ENCODE measurements at regions of chr3 and their contacts with region 1.

Region 1: GRCh38 chr3:20648294-20648693 is 462.3 kb upstream of the SGO1 start:
- DNase-seq: no peak
- ATAC-seq: no peak

Region 2: GRCh38 chr3:20696388-20697150 is 48.3 kb after region 1 on chr3:
- intact Hi-C with region 1: loop called (anchors 2 kb)
- DNase-seq: no peak
- ATAC-seq: no peak

Measured in sciatic nerve (tissue), 2 donors.